MCF 10A (cell line): ENCODE measurements at regions of chr6 and their contacts with region 1.

Region 1: DNA sequence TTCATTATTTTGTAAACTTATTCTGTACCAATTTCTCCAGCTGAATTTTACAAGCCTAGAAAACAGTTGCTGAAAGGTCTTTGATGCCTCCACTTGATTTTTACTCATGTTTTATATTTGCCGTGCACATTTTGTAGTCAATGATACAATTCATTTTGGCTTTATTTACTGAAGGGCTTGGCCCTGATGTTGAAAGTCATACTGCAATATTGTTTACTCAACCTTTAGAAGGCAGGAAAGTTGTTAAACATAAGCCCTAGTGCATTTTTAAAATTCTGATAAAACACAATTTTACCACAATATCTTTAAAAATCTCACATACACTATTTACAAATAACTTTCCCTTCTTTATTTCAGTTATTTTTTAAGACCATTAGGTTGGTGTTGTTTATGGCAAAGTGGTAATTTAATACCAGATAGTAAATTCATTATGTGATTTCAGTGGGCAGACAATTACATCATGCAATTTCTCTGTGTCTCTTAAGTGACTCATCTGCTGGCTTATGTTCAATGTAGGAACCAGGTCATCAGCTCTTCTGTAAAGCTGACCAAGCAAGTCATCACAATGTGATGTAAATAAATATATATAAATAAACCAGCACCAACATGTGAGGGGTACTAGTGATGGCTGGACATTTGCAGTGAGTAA is 121.1 kb upstream of the SLC35B3 start:
- DNase-seq: peak; percentile 90
- H3K4me3 Mint-ChIP-seq: no peak overlapping the region
- H3K27ac Mint-ChIP-seq: peak overlapping the region; percentile 42
- H3K4me1 Mint-ChIP-seq: peaks cover 18% of the 10 kb centered on the region
- H3K27me3 Mint-ChIP-seq: no peaks in the 10 kb centered on the region
- CTCF ChIP-seq: no peak

Region 2: GRCh38 chr6:8574311-8574710 is 17.8 kb after region 1 on chr6:
- CTCF ChIA-PET with region 1: no interaction called
- POLR2A ChIA-PET with region 1: no interaction called
- intact Hi-C with region 1: no loop called
- DNase-seq: no peak
- H3K4me3 Mint-ChIP-seq: no peak overlapping the region
- H3K27ac Mint-ChIP-seq: no peak overlapping the region
- H3K4me1 Mint-ChIP-seq: peaks cover 3% of the 10 kb centered on the region
- H3K27me3 Mint-ChIP-seq: no peaks in the 10 kb centered on the region
- CTCF ChIP-seq: no peak

Region 3: GRCh38 chr6:8627085-8627861 is 70.8 kb after region 1 on chr6:
- CTCF ChIA-PET with region 1: no interaction called
- POLR2A ChIA-PET with region 1: interaction called, 9 read pairs
- intact Hi-C with region 1: loop called (anchors 5 kb)
- DNase-seq: peak; percentile 94
- H3K4me3 Mint-ChIP-seq: no peak overlapping the region
- H3K27ac Mint-ChIP-seq: no peak overlapping the region
- H3K4me1 Mint-ChIP-seq: no peaks in the 10 kb centered on the region
- H3K27me3 Mint-ChIP-seq: no peaks in the 10 kb centered on the region
- CTCF ChIP-seq: no peak